ENCODE measurements at regions of chr1 and their contacts with region 1.

Region 1: GRCh38 chr1:173429471-173430402 is 47.4 kb upstream of the PRDX6 start:
- DNase-seq: peak; percentile 56 to 80
- ATAC-seq: peak; percentile 76 to 81 (median 78)
- H3K4me3 ChIP-seq: no peak overlapping the region
- H3K4me3 Mint-ChIP-seq: peak overlapping the region; percentile 83
- H3K27ac ChIP-seq: peak overlapping the region; percentile 29
- H3K27ac Mint-ChIP-seq: peak overlapping the region; percentile 78 to 79
- H3K4me1 ChIP-seq: peaks cover 17% of the 10 kb centered on the region
- H3K4me1 Mint-ChIP-seq: peaks cover 30 to 33% of the 10 kb centered on the region in 2 donors
- H3K27me3 ChIP-seq: no peaks in the 10 kb centered on the region
- H3K27me3 Mint-ChIP-seq: no peaks in the 10 kb centered on the region
- CTCF ChIP-seq: peak; percentile 74

Region 2: GRCh38 chr1:172895050-172895460 is 534.7 kb before region 1 on chr1:
- intact Hi-C with region 1: no loop called
- DNase-seq: peak in 1 of 2 donors; percentile 70
- ATAC-seq: peak; percentile 85 to 97 (median 94)
- H3K4me3 ChIP-seq: peak overlapping the region; percentile 24
- H3K4me3 Mint-ChIP-seq: peak overlapping the region; percentile 79
- H3K27ac ChIP-seq: peak overlapping the region; percentile 62
- H3K27ac Mint-ChIP-seq: peak overlapping the region; percentile 56 to 80
- H3K4me1 ChIP-seq: peaks cover 7% of the 10 kb centered on the region
- H3K4me1 Mint-ChIP-seq: peaks cover 17% of the 10 kb centered on the region in 2 donors
- H3K27me3 ChIP-seq: no peaks in the 10 kb centered on the region
- H3K27me3 Mint-ChIP-seq: peaks cover 0 to 2% of the 10 kb centered on the region in 2 donors
- CTCF ChIP-seq: no peak

Region 3: GRCh38 chr1:173476664-173477285 is 47.0 kb after region 1 on chr1:
- intact Hi-C with region 1: loop called (anchors 5 kb)
- DNase-seq: peak; percentile 75 to 89
- ATAC-seq: peak; percentile 77 to 92 (median 85)
- H3K4me3 ChIP-seq: peak overlapping the region; percentile 85
- H3K4me3 Mint-ChIP-seq: peak overlapping the region; percentile 89
- H3K27ac ChIP-seq: peak overlapping the region; percentile 94
- H3K27ac Mint-ChIP-seq: peak overlapping the region; percentile 90 to 98
- H3K4me1 ChIP-seq: peaks cover 23% of the 10 kb centered on the region
- H3K4me1 Mint-ChIP-seq: peaks cover 58 to 69% of the 10 kb centered on the region in 2 donors
- H3K27me3 ChIP-seq: no peaks in the 10 kb centered on the region
- H3K27me3 Mint-ChIP-seq: no peaks in the 10 kb centered on the region
- CTCF ChIP-seq: no peak

Region 4: DNA sequence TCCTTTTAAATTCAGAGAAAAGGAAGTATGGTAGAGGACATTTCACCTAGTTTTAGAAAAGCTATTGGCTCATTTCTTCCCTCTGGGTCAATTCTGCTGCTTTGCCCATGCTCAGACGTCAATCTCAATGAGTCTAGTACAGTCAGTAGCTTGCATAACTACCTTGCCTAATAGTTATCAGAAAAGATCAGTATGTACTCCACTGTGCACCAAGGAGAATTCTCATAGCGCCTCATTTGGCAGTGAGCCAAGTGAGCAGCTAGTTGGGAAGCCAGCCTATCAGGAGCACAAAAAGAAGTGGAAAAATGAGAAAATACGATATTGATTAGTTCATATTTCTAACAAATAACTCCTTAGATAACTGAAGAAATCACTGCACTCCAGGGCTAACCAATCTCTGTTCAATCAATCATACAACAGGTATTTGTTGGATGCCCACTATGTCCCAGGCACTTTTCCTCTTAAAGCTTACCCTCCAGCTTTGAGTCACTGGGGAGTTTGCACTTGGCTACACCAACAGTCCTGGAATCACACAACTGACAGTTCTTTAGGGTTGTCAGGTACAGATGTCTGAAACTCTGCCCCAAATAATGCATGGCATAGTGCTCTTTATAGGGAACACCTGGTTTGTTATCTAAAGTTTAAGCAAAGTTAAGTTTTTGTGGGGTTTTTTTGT is 97.6 kb after region 1 on chr1:
- intact Hi-C with region 1: no loop called
- DNase-seq: peak in 1 of 2 donors; percentile 13
- ATAC-seq: no peak
- H3K4me3 ChIP-seq: no peak overlapping the region
- H3K4me3 Mint-ChIP-seq: no peak overlapping the region
- H3K27ac ChIP-seq: no peak overlapping the region
- H3K27ac Mint-ChIP-seq: no peak overlapping the region
- H3K4me1 ChIP-seq: no peaks in the 10 kb centered on the region
- H3K4me1 Mint-ChIP-seq: peaks cover 6% of the 10 kb centered on the region in 2 donors
- H3K27me3 ChIP-seq: no peaks in the 10 kb centered on the region
- H3K27me3 Mint-ChIP-seq: peaks cover 0 to 5% of the 10 kb centered on the region in 2 donors
- CTCF ChIP-seq: no peak

Region 5: DNA sequence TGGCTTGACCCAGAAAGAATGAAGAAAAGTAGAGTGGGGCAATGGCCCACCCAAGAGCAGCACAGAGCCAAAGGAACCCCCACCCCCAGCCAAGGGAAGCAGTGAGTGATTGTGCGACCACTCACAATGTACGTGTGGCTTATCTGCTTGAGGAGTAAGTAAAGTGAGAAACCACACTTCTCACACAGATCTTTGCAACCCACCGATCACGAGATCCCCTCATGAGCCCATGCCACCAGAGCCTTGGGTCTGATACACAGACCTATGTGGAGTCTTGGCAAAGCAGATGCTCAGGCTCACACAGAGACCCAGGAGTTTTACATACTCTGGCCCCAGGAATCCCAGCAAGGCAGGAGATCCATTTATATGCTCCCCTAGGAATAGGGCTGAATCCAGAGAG is 187.1 kb after region 1 on chr1:
- intact Hi-C with region 1: loop called (anchors 5 kb)
- DNase-seq: peak in 1 of 2 donors; percentile 13
- ATAC-seq: peak; percentile 70 to 93 (median 76)
- H3K4me3 ChIP-seq: no peak overlapping the region
- H3K4me3 Mint-ChIP-seq: peak overlapping the region; percentile 47
- H3K27ac ChIP-seq: no peak overlapping the region
- H3K27ac Mint-ChIP-seq: peak overlapping the region in 1 of 2 donors; percentile 37
- H3K4me1 ChIP-seq: peaks cover 17% of the 10 kb centered on the region
- H3K4me1 Mint-ChIP-seq: peaks cover 16 to 24% of the 10 kb centered on the region in 2 donors
- H3K27me3 ChIP-seq: no peaks in the 10 kb centered on the region
- H3K27me3 Mint-ChIP-seq: peaks cover 23 to 44% of the 10 kb centered on the region in 2 donors
- CTCF ChIP-seq: no peak

Region 6: GRCh38 chr1:173714759-173715537 is 285.2 kb after region 1 on chr1 and contains the start of gene KLHL20:
- intact Hi-C with region 1: loop called (anchors 10 kb)
- DNase-seq: peak; percentile 68 to 93
- ATAC-seq: peak; percentile 92 to 97 (median 95)
- H3K4me3 ChIP-seq: peak within 1 kb of the TSS; percentile 99
- H3K4me3 Mint-ChIP-seq: peak within 1 kb of the TSS; percentile 96
- H3K27ac ChIP-seq: peak within 1 kb of the TSS; percentile 94
- H3K27ac Mint-ChIP-seq: peak within 1 kb of the TSS; percentile 95 to 96
- H3K4me1 ChIP-seq: no peaks in the 10 kb centered on the region
- H3K4me1 Mint-ChIP-seq: peaks cover 24 to 26% of the 10 kb centered on the region in 2 donors
- H3K27me3 ChIP-seq: peaks cover 3% of the 10 kb centered on the region
- H3K27me3 Mint-ChIP-seq: peaks cover 14 to 35% of the 10 kb centered on the region in 2 donors
- CTCF ChIP-seq: no peak
- total RNA-seq, gene KLHL20: 31.4 to 34.5 (median 33.1) TPM

Region 7: GRCh38 chr1:173824331-173825081 is 394.8 kb after region 1 on chr1 and contains the starts of genes CENPL and DARS2:
- intact Hi-C with region 1: loop called (anchors 1 kb)
- DNase-seq: peak; percentile 81 to 96
- ATAC-seq: peak; percentile 84 to 93 (median 88)
- H3K4me3 ChIP-seq: peak within 1 kb of the TSS; percentile 94
- H3K4me3 Mint-ChIP-seq: peak within 1 kb of the TSS; percentile 99
- H3K27ac ChIP-seq: peak within 1 kb of the TSS; percentile 85
- H3K27ac Mint-ChIP-seq: peak within 1 kb of the TSS; percentile 95 to 98
- H3K4me1 ChIP-seq: peaks cover 17% of the 10 kb centered on the region
- H3K4me1 Mint-ChIP-seq: peaks cover 27 to 38% of the 10 kb centered on the region in 2 donors
- H3K27me3 ChIP-seq: no peaks in the 10 kb centered on the region
- H3K27me3 Mint-ChIP-seq: no peaks in the 10 kb centered on the region
- CTCF ChIP-seq: no peak
- total RNA-seq, gene CENPL: 8.8 to 16.4 (median 10.0) TPM
- total RNA-seq, gene DARS2: 5.0 to 8.4 (median 5.8) TPM

Region 8: GRCh38 chr1:174217787-174218574 is 788.2 kb after region 1 on chr1:
- intact Hi-C with region 1: loop called (anchors 5 kb)
- DNase-seq: peak in 1 of 2 donors; percentile 70
- ATAC-seq: peak; percentile 70 to 82 (median 73)
- H3K4me3 ChIP-seq: no peak overlapping the region
- H3K4me3 Mint-ChIP-seq: no peak overlapping the region
- H3K27ac ChIP-seq: no peak overlapping the region
- H3K27ac Mint-ChIP-seq: no peak overlapping the region
- H3K4me1 ChIP-seq: no peaks in the 10 kb centered on the region
- H3K4me1 Mint-ChIP-seq: peaks cover 3 to 11% of the 10 kb centered on the region in 2 donors
- H3K27me3 ChIP-seq: no peaks in the 10 kb centered on the region
- H3K27me3 Mint-ChIP-seq: no peaks in the 10 kb centered on the region
- CTCF ChIP-seq: peak; percentile 82

Region 9: GRCh38 chr1:174726167-174726879 is 1296.6 kb after region 1 on chr1:
- intact Hi-C with region 1: loop called (anchors 10 kb)
- DNase-seq: peak in 1 of 2 donors; percentile 23
- ATAC-seq: no peak
- H3K4me3 ChIP-seq: no peak overlapping the region
- H3K4me3 Mint-ChIP-seq: no peak overlapping the region
- H3K27ac ChIP-seq: no peak overlapping the region
- H3K27ac Mint-ChIP-seq: no peak overlapping the region
- H3K4me1 ChIP-seq: no peaks in the 10 kb centered on the region
- H3K4me1 Mint-ChIP-seq: peaks cover under 1 to 5% of the 10 kb centered on the region in 2 donors
- H3K27me3 ChIP-seq: no peaks in the 10 kb centered on the region
- H3K27me3 Mint-ChIP-seq: no peaks in the 10 kb centered on the region
- CTCF ChIP-seq: peak; percentile 56